Tibial artery (tissue), 4 donors: ENCODE measurements at regions of chrX and their contacts with region 1.

Region 1: DNA sequence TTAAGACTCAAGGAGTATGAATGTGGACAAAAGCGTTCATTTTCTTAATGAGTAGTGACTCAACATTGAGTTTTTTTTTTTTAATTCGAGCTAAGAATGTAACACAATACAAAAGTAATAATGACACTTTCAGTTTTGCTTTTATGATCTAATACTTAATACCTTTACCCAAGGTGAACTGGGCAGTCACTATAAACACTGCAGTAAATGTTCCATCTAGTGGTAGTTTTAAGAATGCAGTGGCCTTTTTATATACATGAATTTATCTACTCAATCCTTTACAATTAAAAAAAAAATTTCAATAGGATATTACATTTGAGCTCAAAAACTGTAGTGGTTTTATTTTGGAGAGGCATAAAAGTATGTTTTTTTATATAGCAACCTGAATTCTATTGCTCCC is 33.9 kb downstream of the PDK3 start:
- DNase-seq: no peak
- H3K4me3 ChIP-seq: no peak overlapping the region
- H3K27ac ChIP-seq: peak overlapping the region in 1 of 2 donors; percentile 39
- H3K4me1 ChIP-seq: peaks cover 0 to 46% (median 8%) of the 10 kb centered on the region in 4 donors
- H3K27me3 ChIP-seq: no peaks in the 10 kb centered on the region
- CTCF ChIP-seq: peak; percentile 26 to 41

Region 2: DNA sequence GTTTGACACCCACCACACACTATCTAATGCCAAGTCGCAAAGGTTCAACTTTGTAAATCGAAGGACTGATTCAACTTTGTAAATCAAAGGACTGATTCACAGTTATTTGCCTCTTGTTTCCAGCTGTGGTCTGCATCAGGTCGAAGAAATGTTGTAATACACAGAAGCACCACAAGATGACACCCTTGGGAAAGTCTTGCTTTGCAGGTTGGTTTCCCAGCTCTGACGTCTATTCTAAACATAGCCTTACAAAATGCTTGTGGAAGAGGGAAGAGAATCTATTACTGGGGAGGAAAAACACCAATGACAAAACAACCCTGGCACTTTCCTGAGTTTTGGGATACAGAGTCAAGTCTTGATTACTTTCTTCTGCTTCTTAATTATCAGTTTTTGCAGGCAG is 103.2 kb before region 1 on chrX:
- intact Hi-C with region 1: loop called (anchors 5 kb)
- DNase-seq: no peak
- H3K4me3 ChIP-seq: no peak overlapping the region
- H3K27ac ChIP-seq: peak overlapping the region; percentile 69 to 74
- H3K4me1 ChIP-seq: peaks cover 0 to 30% (median 12%) of the 10 kb centered on the region in 4 donors
- H3K27me3 ChIP-seq: no peaks in the 10 kb centered on the region
- CTCF ChIP-seq: peak; percentile 60 to 81

Region 3: GRCh38 chrX:24428516-24428915 is 70.5 kb before region 1 on chrX:
- intact Hi-C with region 1: no loop called
- DNase-seq: no peak
- H3K4me3 ChIP-seq: no peak overlapping the region
- H3K27ac ChIP-seq: peak overlapping the region; percentile 84
- H3K4me1 ChIP-seq: peaks cover 0 to 47% (median 17%) of the 10 kb centered on the region in 4 donors
- H3K27me3 ChIP-seq: no peaks in the 10 kb centered on the region
- CTCF ChIP-seq: no peak